Activated T-helper 1 cell treated with anti-CD3 and anti-CD28 coated beads, Interleukin-12 subunit alpha, Interleukin-12 subunit beta, Interleukin-2, Interleukin-4 antibody, amounts not matched to agents 30 ng/mL and 10 ng/mL and 1 ng/mL, durations not matched to agents 14 hours and 24 hours and 36 hours (primary cell): ENCODE measurements at regions of chr2 and their contacts with region 1.

Region 1: DNA sequence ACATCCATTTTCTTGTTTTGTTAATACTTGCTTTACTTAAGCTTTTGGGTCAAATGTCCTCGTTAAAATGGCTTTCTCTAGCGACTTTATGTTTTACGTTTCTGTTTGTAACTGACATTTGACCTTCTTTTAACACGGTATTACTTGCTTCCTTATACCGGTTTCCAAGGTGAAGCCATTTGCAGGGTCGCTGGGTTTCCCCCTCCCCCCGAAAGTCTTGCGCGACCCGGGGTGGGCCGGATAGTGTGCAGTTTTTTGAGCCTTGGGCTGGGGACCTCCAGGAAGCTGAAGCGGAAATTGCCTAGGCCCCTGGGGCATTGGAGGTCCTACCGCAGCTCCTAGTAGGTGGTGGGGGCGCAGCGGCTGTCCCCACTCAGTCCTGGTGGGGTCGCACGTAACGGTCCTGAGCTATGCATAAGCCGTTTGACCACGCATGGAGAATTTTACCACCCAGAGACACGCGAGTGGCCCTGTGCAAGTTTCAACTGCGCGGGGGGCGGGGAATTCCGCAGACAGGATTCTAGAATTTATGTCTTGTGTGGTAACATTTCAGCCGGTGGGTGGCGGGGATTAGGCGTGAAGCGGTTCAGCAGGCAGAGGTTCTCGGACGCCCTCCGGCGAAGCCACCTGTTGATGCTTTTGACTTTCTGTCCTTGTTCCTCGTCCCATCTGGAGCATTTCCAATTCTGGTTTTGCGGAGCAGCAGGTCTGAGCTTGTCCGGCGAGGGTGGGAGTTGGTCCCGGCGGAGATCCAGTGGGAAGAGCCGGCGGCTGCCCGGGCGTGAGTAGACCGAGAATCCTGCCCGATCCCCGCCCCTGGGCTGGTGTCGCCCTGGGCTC is 2.4 kb downstream of the CFLAR start:
- DNase-seq: peak; percentile 78
- H3K4me3 Mint-ChIP-seq: peak overlapping the region; percentile 94
- H3K27ac Mint-ChIP-seq: peak overlapping the region; percentile 100
- H3K4me1 Mint-ChIP-seq: peaks cover 65% of the 10 kb centered on the region
- H3K27me3 Mint-ChIP-seq: no peaks in the 10 kb centered on the region

Region 2: GRCh38 chr2:200888704-200889625 is 229.4 kb before region 1 on chr2 and contains the starts of genes NIF3L1 and PPIL3:
- intact Hi-C with region 1: loop called (anchors 1 kb)
- DNase-seq: peak; percentile 96
- H3K4me3 Mint-ChIP-seq: peak within 1 kb of the TSS; percentile 97
- H3K27ac Mint-ChIP-seq: peak within 1 kb of the TSS; percentile 99
- H3K4me1 Mint-ChIP-seq: peaks cover 54% of the 10 kb centered on the region
- H3K27me3 Mint-ChIP-seq: no peaks in the 10 kb centered on the region
- total RNA-seq, gene NIF3L1: 26.6 and 27.3 TPM in 2 replicates
- total RNA-seq, gene PPIL3: 44.2 TPM in 2 replicates

Region 3: DNA sequence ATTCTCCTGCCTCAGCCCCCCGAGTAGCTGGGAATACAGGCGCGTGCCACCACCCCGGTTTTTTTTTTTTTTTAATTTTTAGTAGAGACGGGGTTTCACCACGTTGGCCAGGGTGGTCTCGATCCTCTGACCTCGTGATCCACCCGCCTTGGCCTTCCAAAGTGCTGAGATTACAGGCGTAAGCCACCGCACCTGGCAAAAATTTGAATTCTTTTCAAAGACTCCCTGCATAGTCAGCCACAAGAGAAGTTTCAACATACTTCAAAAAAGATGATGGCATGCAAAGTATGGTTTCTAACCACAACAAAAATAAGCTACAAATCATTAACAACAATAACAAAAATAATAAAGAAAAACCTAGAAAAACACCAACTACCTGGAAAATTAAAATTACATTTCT is 68.9 kb before region 1 on chr2:
- intact Hi-C with region 1: no loop called
- DNase-seq: no peak
- H3K4me3 Mint-ChIP-seq: no peak overlapping the region
- H3K27ac Mint-ChIP-seq: no peak overlapping the region
- H3K4me1 Mint-ChIP-seq: peaks cover 13% of the 10 kb centered on the region
- H3K27me3 Mint-ChIP-seq: no peaks in the 10 kb centered on the region

Region 4: DNA sequence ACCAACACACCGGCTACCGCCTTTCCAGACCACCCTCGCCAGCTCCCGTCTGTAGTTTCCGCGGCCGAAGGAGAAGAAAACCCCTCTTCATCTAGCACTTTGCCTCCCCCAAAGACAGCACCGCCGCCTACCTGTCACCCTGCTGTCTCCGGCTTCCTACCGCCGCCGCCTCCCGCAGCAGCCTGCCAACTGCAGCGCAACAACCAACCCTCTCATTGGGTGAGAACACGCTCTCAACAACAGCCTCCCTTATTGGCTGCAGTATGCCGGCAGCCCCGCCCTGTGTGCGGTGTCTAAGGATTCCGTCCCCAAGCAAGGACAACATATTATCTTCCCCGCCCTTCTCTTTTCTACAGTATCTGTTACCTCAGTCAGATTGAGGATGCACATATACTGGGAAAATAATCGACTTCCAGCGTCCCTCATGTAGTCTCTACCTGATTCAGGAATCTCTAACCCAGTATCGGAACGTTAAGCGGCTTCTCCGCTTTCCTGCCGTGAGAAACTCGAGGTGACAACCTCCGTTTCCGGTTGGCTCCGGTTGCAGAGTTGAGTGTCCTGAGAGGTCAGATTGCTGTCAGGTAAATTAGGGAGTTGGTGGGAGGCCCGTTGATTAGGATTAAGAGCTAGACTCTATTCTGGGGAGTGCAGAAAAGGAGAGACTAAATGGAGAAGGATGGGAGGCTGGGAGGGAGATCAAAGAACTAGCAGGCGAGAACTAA is 46.7 kb before region 1 on chr2 and contains the starts of genes HYCC2 and NDUFB3:
- intact Hi-C with region 1: loop called (anchors 1 kb)
- DNase-seq: peak; percentile 90
- H3K4me3 Mint-ChIP-seq: peak within 1 kb of the TSS; percentile 90
- H3K27ac Mint-ChIP-seq: peak within 1 kb of the TSS; percentile 95
- H3K4me1 Mint-ChIP-seq: peaks cover 49% of the 10 kb centered on the region
- H3K27me3 Mint-ChIP-seq: no peaks in the 10 kb centered on the region
- total RNA-seq, gene HYCC2: 26.1 and 29.4 TPM in 2 replicates
- total RNA-seq, gene NDUFB3: 105 and 121 TPM in 2 replicates

Region 5: GRCh38 chr2:201158111-201158929 is 40.0 kb after region 1 on chr2:
- intact Hi-C with region 1: loop called (anchors 1 kb)
- DNase-seq: peak; percentile 41
- H3K4me3 Mint-ChIP-seq: no peak overlapping the region
- H3K27ac Mint-ChIP-seq: peak overlapping the region; percentile 21
- H3K4me1 Mint-ChIP-seq: peaks cover 25% of the 10 kb centered on the region
- H3K27me3 Mint-ChIP-seq: no peaks in the 10 kb centered on the region

Region 6: DNA sequence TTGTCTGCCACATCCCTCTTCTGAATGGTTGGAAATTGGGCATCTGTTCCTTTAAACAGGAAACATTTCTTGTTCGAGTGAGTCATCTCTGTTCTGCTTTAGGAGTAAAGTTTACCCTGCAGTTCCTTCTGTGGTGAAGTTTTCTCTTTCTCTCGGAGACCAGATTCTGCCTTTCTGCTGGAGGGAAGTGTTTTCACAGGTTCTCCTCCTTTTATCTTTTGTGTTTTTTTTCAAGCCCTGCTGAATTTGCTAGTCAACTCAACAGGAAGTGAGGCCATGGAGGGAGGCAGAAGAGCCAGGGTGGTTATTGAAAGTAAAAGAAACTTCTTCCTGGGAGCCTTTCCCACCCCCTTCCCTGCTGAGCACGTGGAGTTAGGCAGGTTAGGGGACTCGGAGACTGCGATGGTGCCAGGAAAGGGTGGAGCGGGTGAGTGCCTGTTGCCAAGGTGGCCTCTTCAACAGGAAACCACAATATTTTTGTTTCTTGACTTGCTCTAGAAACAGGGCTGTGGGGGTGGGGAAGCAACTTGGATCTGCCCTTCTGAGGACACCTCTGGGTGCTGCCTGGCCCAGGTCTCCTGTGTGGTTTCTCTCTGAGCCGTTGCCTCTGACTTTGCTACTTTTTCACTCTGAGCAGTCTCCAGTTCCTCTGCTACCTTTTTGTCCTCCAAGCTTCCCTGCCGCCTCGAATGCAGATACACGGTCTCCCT is 139.8 kb after region 1 on chr2:
- intact Hi-C with region 1: loop called (anchors 2 kb)
- DNase-seq: peak; percentile 93
- H3K4me3 Mint-ChIP-seq: peak overlapping the region; percentile 91
- H3K27ac Mint-ChIP-seq: peak overlapping the region; percentile 100
- H3K4me1 Mint-ChIP-seq: peaks cover 84% of the 10 kb centered on the region
- H3K27me3 Mint-ChIP-seq: no peaks in the 10 kb centered on the region